PC-3 (cell line): ENCODE measurements at regions of chr3 and their contacts with region 1.

Region 1: GRCh38 chr3:111717601-111718000 is 122.5 kb upstream of the ZBED2 start:
- DNase-seq: peak; percentile 97
- ATAC-seq: peak; percentile 88
- H3K4me3 ChIP-seq: no peak overlapping the region
- H3K27ac ChIP-seq: peak overlapping the region; percentile 25
- H3K4me1 ChIP-seq: peaks cover 35% of the 10 kb centered on the region
- H3K27me3 ChIP-seq: no peaks in the 10 kb centered on the region
- CTCF ChIP-seq: peak; percentile 98

Region 2: GRCh38 chr3:111200027-111200426 is 517.6 kb before region 1 on chr3:
- CTCF ChIA-PET with region 1: no interaction called
- POLR2A ChIA-PET with region 1: no interaction called
- intact Hi-C with region 1: no loop called
- DNase-seq: no peak
- ATAC-seq: no peak
- H3K4me3 ChIP-seq: no peak overlapping the region
- H3K27ac ChIP-seq: no peak overlapping the region
- H3K4me1 ChIP-seq: no peaks in the 10 kb centered on the region
- H3K27me3 ChIP-seq: no peaks in the 10 kb centered on the region
- CTCF ChIP-seq: no peak

Region 3: DNA sequence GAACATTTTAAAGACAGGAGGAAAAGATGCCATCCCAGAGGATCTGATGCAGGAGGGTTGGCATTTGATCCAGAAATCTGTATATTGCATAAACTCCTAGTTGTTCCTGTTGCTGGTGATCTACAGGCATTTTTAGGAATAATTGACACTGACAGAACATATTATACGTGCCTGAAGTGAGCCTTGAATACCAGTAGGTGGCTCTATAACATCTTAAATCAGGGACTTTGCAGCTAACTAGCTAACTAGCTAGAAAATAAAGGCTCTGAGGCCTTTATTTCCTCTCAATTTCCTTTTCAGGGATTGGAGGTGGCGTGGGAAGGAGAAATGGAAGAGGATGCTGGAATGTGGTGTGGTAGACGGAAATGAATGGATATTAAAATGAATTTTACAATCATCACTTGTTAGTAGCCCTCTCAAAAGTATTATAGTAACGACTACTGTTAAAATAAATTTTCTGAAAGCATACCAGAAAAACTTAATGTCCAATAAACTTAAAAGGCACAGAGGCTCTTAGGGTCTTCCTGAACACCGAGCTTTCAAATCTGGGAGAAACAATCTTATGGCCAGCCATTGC is 48.6 kb before region 1 on chr3:
- CTCF ChIA-PET with region 1: interaction called, 37 read pairs
- POLR2A ChIA-PET with region 1: no interaction called
- intact Hi-C with region 1: loop called (anchors 1 kb)
- DNase-seq: peak; percentile 81
- ATAC-seq: peak; percentile 82
- H3K4me3 ChIP-seq: no peak overlapping the region
- H3K27ac ChIP-seq: no peak overlapping the region
- H3K4me1 ChIP-seq: peaks cover 50% of the 10 kb centered on the region
- H3K27me3 ChIP-seq: no peaks in the 10 kb centered on the region
- CTCF ChIP-seq: peak; percentile 95

Region 4: GRCh38 chr3:111768571-111769100 is 51.0 kb after region 1 on chr3:
- CTCF ChIA-PET with region 1: interaction called, 3 read pairs
- POLR2A ChIA-PET with region 1: no interaction called
- intact Hi-C with region 1: loop called (anchors 5 kb)
- DNase-seq: peak; percentile 97
- ATAC-seq: peak; percentile 88
- H3K4me3 ChIP-seq: 0 out of 2 replicates have a peak overlapping the region, but pooled peaks have one; percentile 6
- H3K27ac ChIP-seq: peak overlapping the region; percentile 62
- H3K4me1 ChIP-seq: peaks cover 45% of the 10 kb centered on the region
- H3K27me3 ChIP-seq: no peaks in the 10 kb centered on the region
- CTCF ChIP-seq: no peak

Region 5: DNA sequence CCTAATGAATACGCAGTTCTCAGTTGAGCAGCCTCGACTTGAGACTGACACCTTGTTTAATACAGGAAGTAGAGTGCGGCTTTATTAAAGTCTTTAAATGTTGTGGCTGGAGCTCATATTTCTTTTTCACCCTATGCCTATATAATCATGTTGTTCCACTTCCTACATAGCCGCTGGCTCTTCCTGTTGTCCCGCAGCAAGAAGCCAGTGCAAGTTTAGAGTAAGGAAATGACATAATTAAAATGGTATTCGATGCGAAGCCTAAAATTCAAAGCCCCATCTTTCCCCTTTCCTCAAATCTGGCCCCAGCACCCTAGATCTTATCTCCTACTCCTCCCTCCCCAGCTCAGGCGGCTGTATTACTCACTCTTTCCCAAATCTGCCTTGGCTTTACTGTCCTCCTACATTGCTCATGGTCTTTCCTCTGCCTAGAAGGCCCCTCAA is 133.9 kb after region 1 on chr3:
- CTCF ChIA-PET with region 1: interaction called, 5 read pairs
- POLR2A ChIA-PET with region 1: interaction called, 3 read pairs
- intact Hi-C with region 1: loop called (anchors 2 kb)
- DNase-seq: peak; percentile 97
- ATAC-seq: peak; percentile 69
- H3K4me3 ChIP-seq: peak overlapping the region; percentile 29; the same call in 1 of the 2 replicates
- H3K27ac ChIP-seq: peak overlapping the region; percentile 93
- H3K4me1 ChIP-seq: peaks cover 56% of the 10 kb centered on the region
- H3K27me3 ChIP-seq: no peaks in the 10 kb centered on the region
- CTCF ChIP-seq: no peak

Region 6: DNA sequence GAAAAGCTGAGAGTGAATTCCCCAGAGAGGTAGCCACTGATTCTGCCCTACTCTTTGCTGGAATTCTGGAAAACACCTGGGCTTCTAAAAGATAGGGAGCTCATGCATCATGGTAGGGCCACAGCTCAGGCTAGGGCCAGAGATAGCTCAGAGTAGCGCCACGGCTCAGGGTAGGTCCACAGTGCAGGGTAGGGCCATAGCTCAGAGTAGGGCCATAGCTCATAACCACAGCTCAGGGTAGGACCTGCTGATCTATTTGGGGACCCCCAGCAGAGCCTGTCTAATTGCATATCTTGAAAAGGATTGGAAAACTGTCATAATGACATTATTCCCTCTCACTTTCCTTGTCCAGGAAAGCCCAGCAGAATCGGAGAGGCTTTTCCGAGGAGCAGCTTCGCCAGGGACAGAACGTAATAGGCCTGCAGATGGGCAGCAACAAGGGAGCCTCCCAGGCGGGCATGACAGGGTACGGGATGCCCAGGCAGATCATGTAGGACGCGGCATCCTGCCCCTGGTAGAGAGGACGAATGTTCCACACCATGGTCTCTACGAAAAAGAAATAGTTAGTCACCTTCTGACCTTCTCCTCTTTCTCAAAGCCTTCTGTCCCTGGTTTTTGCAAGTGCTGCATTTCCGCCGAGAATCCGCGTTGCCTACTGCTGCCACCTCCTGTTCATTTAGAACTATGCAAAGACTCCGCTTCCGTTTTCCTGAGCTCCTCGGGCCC is 295.6 kb after region 1 on chr3:
- CTCF ChIA-PET with region 1: interaction called, 4 read pairs
- POLR2A ChIA-PET with region 1: interaction called, 3 read pairs
- intact Hi-C with region 1: loop called (anchors 2 kb)
- DNase-seq: peak; percentile 86
- ATAC-seq: peak; percentile 85
- H3K4me3 ChIP-seq: no peak overlapping the region
- H3K27ac ChIP-seq: no peak overlapping the region
- H3K4me1 ChIP-seq: 0 out of 2 replicates have a peak, but pooled peaks cover 5% of the 10 kb centered on the region
- H3K27me3 ChIP-seq: no peaks in the 10 kb centered on the region
- CTCF ChIP-seq: peak; percentile 85